Sigmoid colon (tissue), 7 donors: ENCODE measurements at regions of chr10 and their contacts with region 1.

Region 1: GRCh38 chr10:91220954-91221675 is 652 bp downstream of the PCGF5 start:
- DNase-seq: peak; percentile 63
- H3K4me3 ChIP-seq: peak overlapping the region; percentile 95 to 99 (median 96)
- H3K27ac ChIP-seq: peak overlapping the region; percentile 89 to 96 (median 94)
- H3K4me1 ChIP-seq: peaks cover 0 to 38% (median 28%) of the 10 kb centered on the region in 4 donors
- H3K27me3 ChIP-seq: no peaks in the 10 kb centered on the region
- CTCF ChIP-seq: no peak
- EP300 ChIP-seq: no peak
- POLR2A ChIP-seq: no peak

Region 2: DNA sequence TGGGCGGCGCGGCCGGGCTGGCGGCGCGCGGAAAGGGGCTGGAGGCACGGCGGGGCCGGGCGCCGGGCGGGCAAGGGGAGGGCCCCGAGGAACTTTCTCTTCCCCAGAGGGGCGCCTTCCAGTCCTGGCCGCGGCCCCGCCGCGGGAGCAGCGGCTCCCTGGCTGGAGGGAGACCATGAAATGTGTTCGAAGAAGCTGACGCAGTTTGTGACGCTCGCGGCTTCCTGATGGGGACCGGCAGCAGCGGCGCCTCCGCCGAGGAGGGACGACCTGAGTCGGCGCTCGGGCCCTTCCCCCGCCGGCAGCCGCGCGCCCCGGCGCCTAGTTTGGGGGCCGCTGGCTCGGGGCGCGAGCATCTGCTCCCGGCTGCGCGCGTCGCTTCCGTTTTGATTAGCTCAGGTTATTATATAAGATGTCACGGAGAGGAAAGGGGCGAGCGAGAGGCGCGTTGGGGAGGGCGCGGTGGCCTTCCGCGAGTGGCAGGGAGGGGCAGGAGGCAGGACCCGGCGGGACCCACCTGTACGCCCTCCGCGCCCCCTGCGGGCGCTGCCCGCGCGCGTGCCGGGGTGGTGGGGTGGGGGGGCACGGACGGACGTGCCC is 57.7 kb before region 1 on chr10:
- intact Hi-C with region 1: loop called (anchors 1 kb)
- DNase-seq: peak; percentile 81
- H3K4me3 ChIP-seq: peak overlapping the region; percentile 81 to 91 (median 90)
- H3K27ac ChIP-seq: peak overlapping the region; percentile 93 to 98 (median 96)
- H3K4me1 ChIP-seq: peaks cover 0 to 24% (median 16%) of the 10 kb centered on the region in 4 donors
- H3K27me3 ChIP-seq: no peaks in the 10 kb centered on the region
- CTCF ChIP-seq: no peak
- EP300 ChIP-seq: no peak
- POLR2A ChIP-seq: no peak